Activated T-helper 1 cell treated with anti-CD3 and anti-CD28 coated beads, Interleukin-12 subunit alpha, Interleukin-12 subunit beta, Interleukin-2, Interleukin-4 antibody, amounts not matched to agents 30 ng/mL and 10 ng/mL and 1 ng/mL, durations not matched to agents 14 hours and 24 hours and 36 hours (primary cell): ENCODE measurements at regions of chr6 and their contacts with region 1.

Region 1: DNA sequence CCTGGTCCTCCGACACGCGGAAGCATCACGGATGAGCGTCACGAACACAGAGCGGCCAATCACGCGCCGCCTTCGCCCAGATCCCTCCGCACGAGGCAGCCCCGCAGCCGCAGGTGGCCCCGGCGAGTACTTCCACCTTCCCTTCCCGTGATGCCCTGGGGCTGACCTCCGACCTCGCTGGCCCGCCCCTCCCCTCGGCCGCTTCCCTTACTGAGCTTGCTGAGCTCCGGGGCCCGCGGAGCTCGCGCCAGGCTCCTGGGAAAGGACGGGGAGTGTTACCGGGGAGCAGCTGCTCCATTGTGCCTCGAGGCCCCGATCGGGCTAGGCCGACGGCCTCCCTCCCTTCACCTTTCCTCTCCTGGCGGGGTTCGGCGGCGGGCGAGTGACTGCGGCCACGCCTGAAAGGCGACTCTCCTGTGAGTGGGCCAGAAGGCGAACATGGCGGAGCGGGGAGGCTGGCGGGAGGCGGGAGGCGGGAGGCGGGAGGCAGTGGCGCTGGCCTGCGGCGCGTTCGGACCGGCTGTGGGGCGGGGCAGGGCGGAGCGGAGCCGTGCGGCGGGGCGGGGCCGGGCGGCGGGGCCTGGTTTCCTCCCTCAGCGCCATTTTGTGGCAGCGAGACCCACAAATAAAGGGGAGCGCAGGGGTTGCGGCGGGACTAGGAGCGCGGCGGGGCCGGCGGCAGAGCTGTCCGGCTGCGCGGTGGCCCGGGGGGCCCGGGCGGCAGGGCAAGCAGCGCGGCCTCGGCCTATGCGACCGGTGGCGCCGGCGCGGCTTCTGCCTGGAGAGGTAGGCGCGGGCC is at the start of gene WTAP:
- DNase-seq: peak; percentile 95
- H3K4me3 Mint-ChIP-seq: peak within 1 kb of the TSS; percentile 93
- H3K27ac Mint-ChIP-seq: peak within 1 kb of the TSS; percentile 96
- H3K4me1 Mint-ChIP-seq: peaks cover 41% of the 10 kb centered on the region
- H3K27me3 Mint-ChIP-seq: no peaks in the 10 kb centered on the region
- total RNA-seq, gene WTAP: 125 and 136 TPM in 2 replicates

Region 2: DNA sequence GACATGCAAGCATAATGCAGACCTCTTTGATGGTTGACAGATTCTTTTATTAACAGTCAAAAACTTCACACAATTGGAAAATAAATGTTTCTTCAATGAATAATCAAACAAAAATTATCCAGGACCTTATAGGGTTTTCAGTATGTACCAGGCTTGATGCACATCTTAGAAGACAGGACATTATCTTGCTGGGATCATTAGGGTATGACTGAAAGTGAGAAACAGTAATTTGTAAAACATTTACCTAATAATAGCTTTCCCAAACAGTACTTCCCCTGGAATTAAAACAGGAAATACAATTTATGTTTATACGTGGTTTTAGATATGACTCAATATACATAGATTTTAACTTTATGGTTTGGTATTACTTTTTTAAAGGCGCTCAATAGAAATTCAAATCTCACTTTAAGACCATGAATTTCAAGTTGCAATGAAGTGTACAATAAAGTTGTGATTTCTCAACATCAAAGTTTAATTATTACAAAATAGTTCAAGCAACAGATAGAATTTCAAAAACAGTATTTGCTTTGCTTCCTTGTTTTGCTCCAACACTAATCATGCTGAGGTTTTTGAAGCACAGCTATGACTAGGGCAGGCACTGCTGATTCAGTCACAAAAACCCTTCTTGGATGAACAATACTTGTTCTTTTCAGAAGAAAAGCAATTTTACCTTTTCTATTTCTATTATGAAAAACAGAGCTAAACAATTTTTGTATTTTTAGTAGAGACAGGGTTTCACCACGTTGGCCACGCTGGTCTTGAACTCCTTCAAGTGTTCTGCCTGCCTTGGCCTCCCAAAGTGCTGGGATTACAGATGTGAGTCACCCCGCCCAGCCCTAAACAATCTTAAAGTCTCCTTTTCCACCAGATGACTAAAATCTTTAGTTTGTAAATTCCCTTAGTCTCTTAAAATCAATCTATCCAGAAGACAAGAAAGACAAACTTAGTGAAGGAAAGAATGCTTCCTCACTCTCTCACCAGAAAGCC is 47.7 kb before region 1 on chr6:
- intact Hi-C with region 1: loop called (anchors 1 kb)
- DNase-seq: no peak
- H3K4me3 Mint-ChIP-seq: no peak overlapping the region
- H3K27ac Mint-ChIP-seq: peak overlapping the region; percentile 82
- H3K4me1 Mint-ChIP-seq: peaks cover 27% of the 10 kb centered on the region
- H3K27me3 Mint-ChIP-seq: no peaks in the 10 kb centered on the region

Region 3: GRCh38 chr6:159742165-159742564 is 15.0 kb after region 1 on chr6:
- intact Hi-C with region 1: loop called (anchors 2 kb)
- DNase-seq: no peak
- H3K4me3 Mint-ChIP-seq: no peak overlapping the region
- H3K27ac Mint-ChIP-seq: no peak overlapping the region
- H3K4me1 Mint-ChIP-seq: peaks cover 23% of the 10 kb centered on the region
- H3K27me3 Mint-ChIP-seq: no peaks in the 10 kb centered on the region

Region 4: DNA sequence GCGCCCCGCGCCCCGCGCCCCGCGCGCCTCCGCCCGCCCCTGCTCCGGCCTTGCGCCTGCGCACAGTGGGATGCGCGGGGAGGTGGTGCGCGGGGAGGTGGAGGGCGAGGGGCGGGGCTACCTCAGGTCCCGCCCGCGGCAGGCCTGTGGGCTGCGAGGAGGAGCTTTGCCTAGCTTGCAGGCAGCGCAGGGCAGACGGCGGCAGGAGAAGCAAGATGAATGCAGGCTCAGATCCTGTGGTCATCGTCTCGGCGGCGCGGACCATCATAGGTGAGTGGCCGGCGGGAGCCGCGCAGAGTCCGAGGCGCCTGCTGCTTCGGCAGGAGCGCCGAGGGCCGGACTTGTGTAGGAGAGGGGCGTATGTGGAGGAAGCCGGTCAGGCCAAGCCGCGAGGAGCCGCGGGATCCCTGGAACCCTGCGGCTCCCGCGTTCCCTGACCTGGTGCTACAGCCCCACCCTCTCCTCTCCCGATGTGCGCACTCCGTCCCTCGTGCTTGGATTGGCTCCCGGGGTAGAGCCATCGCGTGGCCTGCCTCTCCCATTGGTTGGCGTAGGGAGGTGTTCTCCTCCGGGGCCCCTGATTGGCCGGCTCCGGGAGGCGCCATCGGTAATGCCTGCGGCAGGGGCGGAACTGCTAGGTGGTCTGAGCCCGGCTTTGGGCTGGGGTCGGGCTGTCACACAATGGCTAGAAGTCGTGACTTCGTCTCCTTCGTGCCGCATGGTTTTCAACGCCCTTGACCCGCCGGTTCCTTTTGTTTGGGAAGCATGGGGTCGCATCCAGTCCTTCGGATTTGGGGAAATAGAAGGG is 35.0 kb after region 1 on chr6 and contains the start of gene ACAT2:
- intact Hi-C with region 1: loop called (anchors 1 kb)
- DNase-seq: peak; percentile 94
- H3K4me3 Mint-ChIP-seq: peak within 1 kb of the TSS; percentile 97
- H3K27ac Mint-ChIP-seq: peak within 1 kb of the TSS; percentile 93
- H3K4me1 Mint-ChIP-seq: peaks cover 45% of the 10 kb centered on the region
- H3K27me3 Mint-ChIP-seq: no peaks in the 10 kb centered on the region
- total RNA-seq, gene ACAT2: 83.1 and 84.2 TPM in 2 replicates

Region 5: GRCh38 chr6:159968440-159969203 is 241.5 kb after region 1 on chr6 and contains the start of gene IGF2R:
- intact Hi-C with region 1: loop called (anchors 2 kb)
- DNase-seq: peak; percentile 90
- H3K4me3 Mint-ChIP-seq: peak within 1 kb of the TSS; percentile 96
- H3K27ac Mint-ChIP-seq: peak within 1 kb of the TSS; percentile 93
- H3K4me1 Mint-ChIP-seq: peaks cover 34% of the 10 kb centered on the region
- H3K27me3 Mint-ChIP-seq: peaks cover 17% of the 10 kb centered on the region
- total RNA-seq, gene IGF2R: 118 and 126 TPM in 2 replicates

Region 6: DNA sequence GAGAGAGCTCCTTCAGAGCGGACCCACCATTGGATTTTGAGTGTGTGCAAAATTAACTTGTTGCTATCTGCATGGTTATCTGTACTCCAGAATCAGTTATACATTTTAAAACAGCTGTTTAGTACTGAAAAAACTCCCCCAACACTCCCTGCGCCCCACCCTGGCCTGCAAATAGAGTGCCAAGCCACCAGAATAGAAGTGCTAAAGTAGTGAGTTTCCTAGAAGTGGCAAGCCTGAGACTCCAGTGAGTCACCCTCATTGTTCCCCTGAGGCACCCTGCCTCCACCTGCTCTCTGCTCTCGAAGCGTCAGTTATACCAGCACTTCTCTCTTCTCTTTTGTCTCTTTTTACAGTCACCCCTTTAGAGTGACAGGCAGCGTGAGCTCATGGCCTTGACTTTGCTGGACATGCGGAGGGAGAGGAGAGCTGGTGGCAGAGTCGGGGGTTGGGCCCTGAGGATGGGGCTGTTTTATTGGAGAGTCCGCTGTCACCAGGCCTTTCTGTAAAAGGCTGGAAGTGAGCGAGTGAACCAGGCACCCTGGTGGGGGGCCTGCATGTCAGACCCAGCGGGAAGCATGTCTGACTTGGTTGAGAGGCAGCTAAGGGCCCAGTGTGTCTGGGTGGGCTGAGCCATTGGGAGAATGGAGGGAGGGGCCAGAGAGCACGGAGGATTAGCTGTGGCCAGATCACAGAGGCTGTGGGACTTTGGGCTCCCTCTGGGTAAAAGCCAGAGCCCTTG is 252.2 kb after region 1 on chr6:
- intact Hi-C with region 1: loop called (anchors 2 kb)
- DNase-seq: peak; percentile 58
- H3K4me3 Mint-ChIP-seq: peak overlapping the region; percentile 86
- H3K27ac Mint-ChIP-seq: peak overlapping the region; percentile 97
- H3K4me1 Mint-ChIP-seq: peaks cover 89% of the 10 kb centered on the region
- H3K27me3 Mint-ChIP-seq: no peaks in the 10 kb centered on the region

Region 7: DNA sequence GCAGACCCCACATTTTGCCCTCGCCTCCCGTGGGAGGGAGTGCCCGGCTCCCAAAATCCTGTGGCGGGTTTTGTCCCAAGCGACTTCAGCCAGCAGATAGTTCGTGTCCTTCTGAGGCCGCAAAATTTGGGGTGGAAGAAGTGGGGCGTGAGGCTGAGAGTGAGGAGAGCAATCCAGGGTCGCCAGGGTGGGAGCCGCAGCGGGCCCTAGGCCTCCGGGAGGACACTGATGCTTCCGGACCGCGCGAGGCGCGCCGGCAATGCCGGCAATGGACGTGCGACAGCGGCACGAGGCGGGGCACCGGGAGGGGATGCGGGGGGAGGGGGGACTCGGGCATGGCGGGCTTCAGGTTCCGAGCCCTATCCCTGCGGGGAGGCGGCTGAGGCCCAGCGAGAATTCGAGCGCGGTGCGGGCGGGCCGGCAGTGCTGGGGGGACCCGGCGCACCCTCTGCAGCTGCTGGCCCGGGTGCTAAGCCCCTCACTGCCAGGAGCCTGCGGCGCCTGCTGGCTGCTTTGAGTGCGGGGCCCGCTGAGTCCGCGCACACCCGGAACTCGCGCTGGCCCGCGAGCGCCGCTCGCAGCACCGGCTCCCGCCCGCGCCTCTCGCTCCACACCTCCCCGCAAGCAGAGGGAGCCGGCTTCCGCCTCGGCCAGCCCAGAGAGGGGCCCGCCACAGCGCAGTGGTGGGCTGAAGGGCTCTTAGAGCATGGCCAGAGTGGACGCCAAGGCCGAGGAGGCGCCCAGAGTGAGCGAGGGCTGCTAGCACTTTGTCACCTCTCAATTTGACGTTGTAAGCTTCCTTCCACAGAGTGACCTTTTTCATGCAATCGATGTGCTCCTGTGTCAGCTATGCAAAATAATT is 793.2 kb after region 1 on chr6:
- intact Hi-C with region 1: loop called (anchors 5 kb)
- DNase-seq: peak; percentile 63
- H3K4me3 Mint-ChIP-seq: peak overlapping the region; percentile 91
- H3K27ac Mint-ChIP-seq: peak overlapping the region; percentile 83
- H3K4me1 Mint-ChIP-seq: peaks cover 18% of the 10 kb centered on the region
- H3K27me3 Mint-ChIP-seq: peaks cover 40% of the 10 kb centered on the region